ENCODE measurements at regions of chr12 and their contacts with region 1.

Region 1: DNA sequence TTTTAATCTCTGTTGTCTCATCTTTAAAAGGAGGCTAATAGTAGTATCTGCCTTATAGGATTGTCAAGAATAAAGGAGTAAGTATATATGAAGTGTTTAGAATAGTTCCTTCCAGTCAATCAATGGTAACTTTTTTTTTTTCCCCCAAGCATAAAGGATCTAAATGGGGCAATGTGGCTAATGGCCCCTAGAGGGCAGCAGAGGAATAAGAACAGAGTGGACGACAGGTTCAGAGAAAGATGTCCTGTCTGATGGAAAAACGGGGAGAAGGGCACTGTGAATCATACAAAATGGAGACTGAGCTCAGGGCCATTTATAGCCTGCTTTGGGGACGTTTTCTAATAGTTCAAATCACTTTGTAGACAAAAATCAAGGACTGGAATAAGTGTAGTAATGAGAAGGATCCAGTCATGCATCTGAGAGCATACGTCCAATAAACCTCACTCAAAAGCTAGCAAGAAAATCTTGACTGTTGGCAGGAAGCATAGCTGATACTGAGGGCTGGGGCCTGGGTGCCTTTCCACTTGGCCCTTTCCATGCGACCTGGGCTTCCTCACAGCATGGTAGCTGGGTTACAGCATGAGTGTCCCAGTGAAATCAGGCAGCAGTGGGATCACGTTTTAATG is 51.3 kb downstream of the IFNG-AS1 start:
- DNase-seq: no peak
- H3K4me3 ChIP-seq: no peak overlapping the region
- H3K27ac ChIP-seq: no peak overlapping the region
- H3K4me1 ChIP-seq: peaks cover 0 to 10% (median 0%) of the 10 kb centered on the region in 3 donors
- H3K27me3 ChIP-seq: no peaks in the 10 kb centered on the region
- CTCF ChIP-seq: peak; percentile 57 to 80 (median 74)
- POLR2A ChIP-seq: no peak

Region 2: GRCh38 chr12:67617619-67618018 is 422.9 kb before region 1 on chr12:
- intact Hi-C with region 1: no loop called
- DNase-seq: no peak
- H3K4me3 ChIP-seq: no peak overlapping the region
- H3K27ac ChIP-seq: no peak overlapping the region
- H3K4me1 ChIP-seq: no peaks in the 10 kb centered on the region
- H3K27me3 ChIP-seq: no peaks in the 10 kb centered on the region
- CTCF ChIP-seq: no peak
- POLR2A ChIP-seq: no peak

Region 3: DNA sequence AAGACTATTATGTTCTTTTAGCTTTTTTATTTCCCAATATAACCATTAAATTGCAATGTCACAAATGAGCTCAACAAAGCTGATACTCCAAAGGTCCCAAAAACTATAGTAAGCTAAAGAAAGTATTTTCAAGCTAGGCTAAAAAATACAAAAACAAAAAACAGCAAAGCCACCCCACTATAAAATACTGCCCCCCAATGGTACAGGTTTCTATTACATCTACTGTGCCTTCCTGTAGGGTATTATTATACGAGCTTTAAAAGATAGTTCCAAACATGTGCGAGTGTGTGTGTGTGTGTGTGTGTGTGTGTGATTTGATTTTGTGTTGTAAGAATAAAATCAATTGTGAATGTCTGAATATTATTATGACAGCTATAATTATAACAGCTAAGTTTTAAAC is 117.9 kb after region 1 on chr12:
- intact Hi-C with region 1: loop called (anchors 10 kb)
- DNase-seq: no peak
- H3K4me3 ChIP-seq: no peak overlapping the region
- H3K27ac ChIP-seq: no peak overlapping the region
- H3K4me1 ChIP-seq: peaks cover 0 to 4% (median 0%) of the 10 kb centered on the region in 3 donors
- H3K27me3 ChIP-seq: no peaks in the 10 kb centered on the region
- CTCF ChIP-seq: peak in 5 of 6 experiments; percentile 21 to 65 (median 44)
- POLR2A ChIP-seq: no peak